ENCODE measurements at regions of chr21 and their contacts with region 1.

Region 1: GRCh38 chr21:41321211-41321907 is 4.8 kb downstream of the FAM3B start:
- DNase-seq: no peak
- ATAC-seq: peak; percentile 24
- H3K4me3 ChIP-seq: peak overlapping the region; percentile 32 to 69 (median 38); a peak in 5 of 6 replicates
- H3K27ac ChIP-seq: peak overlapping the region; percentile 96
- H3K4me1 ChIP-seq: peaks cover 91% of the 10 kb centered on the region
- H3K27me3 ChIP-seq: no peaks in the 10 kb centered on the region
- CTCF ChIP-seq: peak; percentile 63
- EP300 ChIP-seq: no peak
- POLR2A ChIP-seq: 0 out of 4 replicates have a peak, but pooled peaks of 1 of the 2 experiments have one; percentile 46
- RAD21 ChIP-seq: peak; percentile 47; the same call in 1 of the 2 replicates

Region 2: GRCh38 chr21:40902299-40902698 is 419.1 kb before region 1 on chr21:
- CTCF ChIA-PET with region 1: no interaction called
- POLR2A ChIA-PET with region 1: no interaction called
- in situ Hi-C with region 1: no loop called
- intact Hi-C with region 1: no loop called
- DNase-seq: no peak
- ATAC-seq: no peak
- H3K4me3 ChIP-seq: no peak overlapping the region
- H3K27ac ChIP-seq: no peak overlapping the region
- H3K4me1 ChIP-seq: no peaks in the 10 kb centered on the region
- H3K27me3 ChIP-seq: no peaks in the 10 kb centered on the region
- CTCF ChIP-seq: no peak
- EP300 ChIP-seq: no peak
- POLR2A ChIP-seq: no peak
- RAD21 ChIP-seq: no peak

Region 3: GRCh38 chr21:41333752-41334151 is 12.4 kb after region 1 on chr21:
- CTCF ChIA-PET with region 1: no interaction called
- POLR2A ChIA-PET with region 1: interaction called, 15 read pairs
- in situ Hi-C with region 1: no loop called
- intact Hi-C with region 1: no loop called
- DNase-seq: no peak
- ATAC-seq: no peak
- H3K4me3 ChIP-seq: no peak overlapping the region
- H3K27ac ChIP-seq: no peak overlapping the region
- H3K4me1 ChIP-seq: peaks cover 21% of the 10 kb centered on the region
- H3K27me3 ChIP-seq: no peaks in the 10 kb centered on the region
- CTCF ChIP-seq: no peak
- EP300 ChIP-seq: no peak
- POLR2A ChIP-seq: no peak
- RAD21 ChIP-seq: no peak

Region 4: GRCh38 chr21:41361786-41362604 is 40.6 kb after region 1 on chr21 and contains the start of gene MX2:
- CTCF ChIA-PET with region 1: no interaction called
- POLR2A ChIA-PET with region 1: interaction called, 31 read pairs
- in situ Hi-C with region 1: no loop called
- intact Hi-C with region 1: loop called (anchors 1 kb)
- DNase-seq: peak; percentile 35
- ATAC-seq: peak; percentile 19
- H3K4me3 ChIP-seq: peak within 1 kb of the TSS; percentile 32 to 65 (median 41)
- H3K27ac ChIP-seq: peak within 1 kb of the TSS; percentile 15
- H3K4me1 ChIP-seq: peaks cover 64% of the 10 kb centered on the region
- H3K27me3 ChIP-seq: no peaks in the 10 kb centered on the region
- CTCF ChIP-seq: no peak
- EP300 ChIP-seq: no peak
- POLR2A ChIP-seq: no peak; a peak in 1 of 4 replicates
- RAD21 ChIP-seq: no peak
- total RNA-seq, gene MX2: 35.7 and 46.9 TPM in 2 replicates

Region 5: GRCh38 chr21:41369105-41369919 is 48.0 kb after region 1 on chr21:
- CTCF ChIA-PET with region 1: no interaction called
- POLR2A ChIA-PET with region 1: interaction called, 105 read pairs
- in situ Hi-C with region 1: no loop called
- intact Hi-C with region 1: loop called (anchors 1 kb)
- DNase-seq: peak; percentile 40
- ATAC-seq: peak; percentile 76
- H3K4me3 ChIP-seq: peak overlapping the region; percentile 57 to 73 (median 67); a peak in 5 of 6 replicates
- H3K27ac ChIP-seq: peak overlapping the region; percentile 68
- H3K4me1 ChIP-seq: peaks cover 56% of the 10 kb centered on the region
- H3K27me3 ChIP-seq: no peaks in the 10 kb centered on the region; a peak in 1 of 5 replicates
- CTCF ChIP-seq: peak; percentile 52
- EP300 ChIP-seq: no peak
- POLR2A ChIP-seq: no peak; a peak in 1 of 4 replicates
- RAD21 ChIP-seq: peak; percentile 30